ENCODE measurements at regions of chr4 and their contacts with region 1.

Region 1: DNA sequence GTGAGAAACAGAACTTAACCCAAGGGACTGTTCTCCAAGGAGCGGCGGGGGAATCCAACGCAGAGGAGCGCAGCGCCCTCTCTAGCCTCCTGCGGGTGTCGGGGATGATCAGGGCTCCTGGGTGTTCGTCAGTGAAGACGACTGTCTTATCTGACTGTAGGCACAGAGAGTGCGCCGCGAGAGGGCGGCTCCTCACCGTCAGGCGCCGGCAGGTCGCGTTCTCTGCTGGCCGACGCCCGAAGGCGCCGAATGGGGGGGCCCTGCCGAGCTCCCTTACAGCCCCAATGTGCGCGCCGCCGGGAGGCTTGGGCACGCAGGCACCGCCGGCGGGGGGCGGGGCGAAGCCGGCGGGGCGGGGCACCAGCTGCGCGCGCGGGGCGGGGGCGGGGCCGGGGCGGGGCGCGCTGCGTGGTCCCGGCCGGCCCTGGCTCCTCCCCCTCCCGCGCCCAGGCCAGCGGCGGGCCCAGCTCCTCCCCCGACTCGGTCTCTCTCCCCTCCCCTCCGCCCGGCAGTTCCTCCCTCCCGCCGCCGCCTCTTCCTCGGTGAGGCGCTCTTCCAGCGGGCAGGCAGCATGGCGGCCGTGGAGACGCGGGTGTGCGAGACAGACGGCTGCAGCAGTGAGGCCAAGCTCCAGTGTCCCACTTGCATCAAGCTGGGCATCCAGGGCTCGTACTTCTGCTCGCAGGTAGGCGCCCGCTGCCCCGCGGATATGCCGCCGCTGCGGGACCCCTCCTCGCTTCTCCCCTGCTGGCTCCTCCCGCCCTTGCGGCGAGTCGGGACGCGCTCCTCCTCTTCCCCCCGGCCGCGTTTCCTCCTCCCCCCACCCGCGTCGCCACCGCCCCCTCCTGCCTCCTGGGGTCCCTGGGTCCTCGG is at the start of gene METAP1:
- DNase-seq: peak; percentile 97
- H3K4me3 Mint-ChIP-seq: peak within 1 kb of the TSS; percentile 88
- H3K27ac Mint-ChIP-seq: peak within 1 kb of the TSS; percentile 96
- H3K4me1 Mint-ChIP-seq: peaks cover 37% of the 10 kb centered on the region
- H3K27me3 Mint-ChIP-seq: no peaks in the 10 kb centered on the region
- total RNA-seq, gene METAP1: 60.7 to 61.1 TPM

Region 2: DNA sequence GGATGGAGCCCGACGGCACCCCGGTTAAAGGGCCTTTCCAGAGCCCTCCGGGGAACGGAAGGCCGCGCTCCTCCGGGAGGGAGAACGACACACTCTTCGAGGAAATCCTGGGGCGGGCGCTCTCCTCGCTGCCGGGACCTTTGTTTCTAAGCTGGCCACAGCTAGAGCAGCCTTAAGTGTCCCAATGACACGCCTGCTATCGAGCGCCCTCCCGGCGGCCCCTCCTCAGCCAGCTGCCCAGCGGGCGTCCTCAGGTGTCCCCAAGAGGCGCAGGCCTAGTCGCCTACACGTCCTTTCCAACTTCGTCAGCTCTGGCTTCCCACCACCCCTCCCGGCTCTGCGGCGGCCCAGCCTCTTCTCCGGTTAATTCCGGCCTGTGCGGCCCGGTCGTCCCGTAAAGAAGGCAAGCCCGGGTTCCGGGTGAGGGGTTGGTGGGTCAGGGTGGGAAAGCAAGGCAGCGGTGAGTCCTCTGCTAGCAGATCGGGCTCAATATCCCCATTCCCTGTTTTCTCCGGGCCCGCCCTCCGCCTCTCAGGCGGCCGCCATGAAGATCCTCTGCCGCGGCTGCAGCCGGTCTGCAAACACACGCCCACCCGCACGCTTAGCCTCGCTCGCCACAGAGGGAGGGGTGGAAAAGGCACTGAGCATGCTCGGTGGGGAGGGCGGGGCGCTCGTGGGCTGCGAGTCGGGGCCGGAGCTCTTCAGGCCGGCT is 734.7 kb before region 1 on chr4:
- CTCF ChIA-PET with region 1: interaction called, 6 read pairs
- POLR2A ChIA-PET with region 1: interaction called, 6 read pairs
- intact Hi-C with region 1: loop called (anchors 1 kb)
- DNase-seq: peak; percentile 96
- H3K4me3 Mint-ChIP-seq: peak overlapping the region; percentile 95
- H3K27ac Mint-ChIP-seq: peak overlapping the region; percentile 97
- H3K4me1 Mint-ChIP-seq: peaks cover 43% of the 10 kb centered on the region
- H3K27me3 Mint-ChIP-seq: no peaks in the 10 kb centered on the region

Region 3: GRCh38 chr4:98467627-98468072 is 527.8 kb before region 1 on chr4:
- CTCF ChIA-PET with region 1: interaction called, 10 read pairs
- POLR2A ChIA-PET with region 1: no interaction called
- intact Hi-C with region 1: loop called (anchors 1 kb)
- DNase-seq: peak; percentile 82
- H3K4me3 Mint-ChIP-seq: peak overlapping the region; percentile 67
- H3K27ac Mint-ChIP-seq: no peak overlapping the region
- H3K4me1 Mint-ChIP-seq: peaks cover 27% of the 10 kb centered on the region
- H3K27me3 Mint-ChIP-seq: no peaks in the 10 kb centered on the region

Region 4: DNA sequence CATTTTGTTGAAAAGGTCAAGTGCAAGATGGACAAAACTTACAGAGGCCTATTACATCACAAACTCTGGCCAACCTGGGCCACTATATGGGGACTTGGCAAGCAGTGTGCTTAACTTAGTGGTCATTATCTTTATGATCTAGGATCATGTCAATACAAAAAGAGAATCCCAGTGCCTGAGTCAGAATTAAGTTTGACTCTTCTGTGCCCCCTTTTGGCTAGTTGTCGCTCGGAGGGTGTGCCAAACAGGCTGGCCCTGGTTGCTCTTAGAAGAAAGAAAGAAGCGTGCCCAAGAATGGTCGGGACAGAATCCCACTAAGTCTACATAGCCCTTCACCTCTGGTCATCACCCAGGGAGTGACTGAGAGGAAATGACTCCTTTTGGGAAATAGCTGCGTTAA is 166.6 kb before region 1 on chr4:
- CTCF ChIA-PET with region 1: no interaction called
- POLR2A ChIA-PET with region 1: no interaction called
- intact Hi-C with region 1: no loop called
- DNase-seq: peak; percentile 42
- H3K4me3 Mint-ChIP-seq: no peak overlapping the region
- H3K27ac Mint-ChIP-seq: no peak overlapping the region
- H3K4me1 Mint-ChIP-seq: peaks cover 5% of the 10 kb centered on the region
- H3K27me3 Mint-ChIP-seq: no peaks in the 10 kb centered on the region

Region 5: DNA sequence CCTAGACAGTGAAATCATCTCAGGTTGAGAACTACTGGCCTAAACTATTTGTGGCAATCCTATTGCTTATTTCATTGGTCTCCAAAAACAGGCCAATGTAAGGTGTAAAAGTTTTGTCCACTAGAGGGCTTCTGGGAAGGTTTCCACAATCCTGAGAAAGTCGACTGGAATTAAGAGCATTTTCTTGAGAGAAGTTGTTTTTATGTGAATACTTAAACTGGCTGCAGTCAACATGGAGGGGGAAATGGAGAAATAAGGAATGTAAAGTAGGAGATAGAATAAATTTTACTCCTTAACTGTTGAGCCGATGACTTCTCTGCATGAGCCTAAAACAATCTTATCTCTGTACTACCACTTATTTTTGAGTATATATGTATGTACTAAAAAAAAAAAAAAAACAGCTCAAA is 55.5 kb before region 1 on chr4:
- CTCF ChIA-PET with region 1: interaction called, 6 read pairs
- POLR2A ChIA-PET with region 1: no interaction called
- intact Hi-C with region 1: loop called (anchors 2 kb)
- DNase-seq: no peak
- H3K4me3 Mint-ChIP-seq: no peak overlapping the region
- H3K27ac Mint-ChIP-seq: no peak overlapping the region
- H3K4me1 Mint-ChIP-seq: peaks cover 16% of the 10 kb centered on the region
- H3K27me3 Mint-ChIP-seq: no peaks in the 10 kb centered on the region

Region 6: GRCh38 chr4:99028187-99028586 is 32.8 kb after region 1 on chr4:
- CTCF ChIA-PET with region 1: interaction called, 12 read pairs
- POLR2A ChIA-PET with region 1: interaction called, 6 read pairs
- intact Hi-C with region 1: loop called (anchors 1 kb)
- DNase-seq: peak; percentile 21
- H3K4me3 Mint-ChIP-seq: no peak overlapping the region
- H3K27ac Mint-ChIP-seq: no peak overlapping the region
- H3K4me1 Mint-ChIP-seq: peaks cover 57% of the 10 kb centered on the region
- H3K27me3 Mint-ChIP-seq: no peaks in the 10 kb centered on the region

Region 7: GRCh38 chr4:99405433-99406115 is 410.2 kb after region 1 on chr4:
- CTCF ChIA-PET with region 1: interaction called, 21 read pairs
- POLR2A ChIA-PET with region 1: interaction called, 3 read pairs
- intact Hi-C with region 1: loop called (anchors 1 kb)
- DNase-seq: peak; percentile 66
- H3K4me3 Mint-ChIP-seq: no peak overlapping the region
- H3K27ac Mint-ChIP-seq: no peak overlapping the region
- H3K4me1 Mint-ChIP-seq: peaks cover 18% of the 10 kb centered on the region
- H3K27me3 Mint-ChIP-seq: peaks cover 2% of the 10 kb centered on the region

Region 8: GRCh38 chr4:99816545-99817308 is 821.3 kb after region 1 on chr4 and contains the start of gene DAPP1:
- CTCF ChIA-PET with region 1: no interaction called
- POLR2A ChIA-PET with region 1: no interaction called
- intact Hi-C with region 1: loop called (anchors 10 kb)
- DNase-seq: peak; percentile 89
- H3K4me3 Mint-ChIP-seq: peak within 1 kb of the TSS; percentile 81
- H3K27ac Mint-ChIP-seq: peak within 1 kb of the TSS; percentile 93
- H3K4me1 Mint-ChIP-seq: peaks cover 64% of the 10 kb centered on the region
- H3K27me3 Mint-ChIP-seq: no peaks in the 10 kb centered on the region
- total RNA-seq, gene DAPP1: 23.6 TPM

Measured in activated CD4-positive, alpha-beta memory T cell treated with anti-CD3 and anti-CD28 coated beads for 36 hours (primary cell).